GM13976 (cell line): ENCODE measurements at regions of chr5 and their contacts with region 1.

Region 1: GRCh38 chr5:62206150-62206829 is 99.7 kb upstream of the KIF2A start:
- DNase-seq: no peak
- CTCF ChIP-seq: no peak

Region 2: DNA sequence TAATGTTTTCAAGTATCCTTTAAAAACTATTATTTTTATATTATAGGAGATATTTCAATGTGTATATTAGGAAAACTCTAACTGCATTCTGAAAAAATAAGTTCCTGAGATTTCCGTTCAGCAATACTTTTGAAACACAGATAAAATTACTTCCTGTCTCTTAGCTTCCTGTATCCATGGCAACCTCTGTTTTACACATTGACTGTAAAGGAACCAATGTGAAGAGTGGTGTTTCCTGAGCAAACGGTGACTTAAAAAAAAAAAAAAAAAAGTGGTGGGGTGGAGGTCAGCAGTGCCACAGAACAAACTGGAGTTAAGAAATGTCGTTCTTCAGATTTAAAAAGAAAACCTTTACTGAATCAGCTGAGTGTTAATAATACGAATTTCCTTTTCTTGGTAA is 372.2 kb after region 1 on chr5 and contains the start of gene LRRC70:
- in situ Hi-C with region 1: loop called (anchors 25 kb)
- DNase-seq: no peak
- CTCF ChIP-seq: no peak